Psoas muscle (tissue), 8 donors: ENCODE measurements at regions of chr17 and their contacts with region 1.

Region 1: GRCh38 chr17:39209317-39210092 is 9.4 kb downstream of the RPL19 start:
- DNase-seq: peak; percentile 85 to 93
- ATAC-seq: peak; percentile 76 to 87 (median 80)
- H3K4me3 ChIP-seq: peak overlapping the region; percentile 65
- H3K27ac ChIP-seq: peak overlapping the region; percentile 80
- H3K4me1 ChIP-seq: peaks cover 21% of the 10 kb centered on the region
- H3K27me3 ChIP-seq: no peaks in the 10 kb centered on the region
- CTCF ChIP-seq: no peak

Region 2: DNA sequence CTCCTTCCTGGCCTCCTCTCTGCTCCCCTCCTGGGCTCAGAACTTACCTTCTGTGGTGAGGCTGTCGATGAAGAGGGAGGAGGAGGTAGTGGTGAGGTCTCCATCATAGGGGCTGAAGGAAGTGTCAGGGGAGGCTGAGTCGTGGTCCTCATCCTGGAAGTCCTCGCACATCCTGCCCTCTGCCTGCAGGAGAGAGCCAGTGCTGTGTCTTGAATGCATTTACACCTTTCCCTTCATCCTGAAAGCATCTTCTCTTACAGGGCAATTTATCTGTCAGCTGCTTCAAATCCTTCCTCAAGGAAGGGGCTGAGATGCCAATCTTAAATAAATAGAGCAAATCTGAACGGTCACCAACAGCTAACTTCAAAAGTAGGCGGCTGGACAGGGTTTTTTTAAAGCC is 131.6 kb before region 1 on chr17:
- intact Hi-C with region 1: loop called in 1 of 2 experiments (anchors 10 kb)
- DNase-seq: no peak
- ATAC-seq: no peak
- H3K4me3 ChIP-seq: no peak overlapping the region
- H3K27ac ChIP-seq: no peak overlapping the region
- H3K4me1 ChIP-seq: peaks cover 15% of the 10 kb centered on the region
- H3K27me3 ChIP-seq: no peaks in the 10 kb centered on the region
- CTCF ChIP-seq: no peak

Region 3: GRCh38 chr17:39235555-39236449 is 26.3 kb after region 1 on chr17:
- intact Hi-C with region 1: loop called (anchors 1 to 5 kb)
- DNase-seq: no peak
- ATAC-seq: peak; percentile 55 to 78 (median 64)
- H3K4me3 ChIP-seq: no peak overlapping the region
- H3K27ac ChIP-seq: no peak overlapping the region
- H3K4me1 ChIP-seq: peaks cover 15% of the 10 kb centered on the region
- H3K27me3 ChIP-seq: peaks cover 0 to 4% (median 0%) of the 10 kb centered on the region in 3 donors
- CTCF ChIP-seq: peak; percentile 47